Activated naive CD4-positive, alpha-beta T cell treated with anti-CD3 and anti-CD28 coated beads, Interleukin-2, amount 10 ng/mL, durations not matched to agents 7 days and 5 days (primary cell): ENCODE measurements at regions of chr1 and their contacts with region 1.

Region 1: GRCh38 chr1:45569962-45570581 is 13.8 kb upstream of the NASP start:
- DNase-seq: peak; percentile 80
- H3K4me3 Mint-ChIP-seq: no peak overlapping the region
- H3K27ac Mint-ChIP-seq: no peak overlapping the region
- H3K4me1 Mint-ChIP-seq: no peaks in the 10 kb centered on the region
- H3K27me3 Mint-ChIP-seq: no peaks in the 10 kb centered on the region

Region 2: DNA sequence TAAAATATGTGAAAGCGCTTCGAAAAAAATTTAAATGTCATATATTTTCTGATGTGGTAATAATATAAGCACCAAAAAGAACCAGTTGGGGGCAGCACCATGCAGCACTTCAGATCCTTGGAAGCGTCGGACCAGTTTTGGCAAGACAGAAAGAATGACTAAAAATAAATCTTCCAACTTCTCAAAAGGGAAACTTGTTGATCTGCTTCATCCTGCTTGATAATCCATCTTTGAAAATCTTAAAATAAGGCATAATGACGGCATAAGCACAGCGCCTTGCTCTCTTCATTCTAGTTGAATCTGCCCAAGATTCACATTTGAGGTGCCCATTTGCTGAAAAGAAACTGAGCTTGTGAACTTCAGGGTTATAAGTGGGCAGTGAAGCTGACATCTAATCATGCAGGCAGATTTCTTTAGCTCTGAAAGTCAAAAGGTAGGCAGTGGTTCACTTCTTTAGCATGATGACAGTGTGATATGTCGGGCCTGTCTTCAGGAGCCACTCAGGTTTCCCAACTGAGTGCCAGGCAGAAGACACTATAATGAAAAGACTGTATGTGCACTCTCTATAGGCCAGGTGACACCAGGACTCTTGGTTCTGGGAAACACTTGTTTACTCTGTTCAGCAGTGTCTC is 210.1 kb before region 1 on chr1:
- CTCF ChIA-PET with region 1: interaction called, 40 read pairs
- DNase-seq: peak; percentile 65
- H3K4me3 Mint-ChIP-seq: no peak overlapping the region
- H3K27ac Mint-ChIP-seq: no peak overlapping the region
- H3K4me1 Mint-ChIP-seq: peaks cover 5% of the 10 kb centered on the region
- H3K27me3 Mint-ChIP-seq: no peaks in the 10 kb centered on the region

Region 3: DNA sequence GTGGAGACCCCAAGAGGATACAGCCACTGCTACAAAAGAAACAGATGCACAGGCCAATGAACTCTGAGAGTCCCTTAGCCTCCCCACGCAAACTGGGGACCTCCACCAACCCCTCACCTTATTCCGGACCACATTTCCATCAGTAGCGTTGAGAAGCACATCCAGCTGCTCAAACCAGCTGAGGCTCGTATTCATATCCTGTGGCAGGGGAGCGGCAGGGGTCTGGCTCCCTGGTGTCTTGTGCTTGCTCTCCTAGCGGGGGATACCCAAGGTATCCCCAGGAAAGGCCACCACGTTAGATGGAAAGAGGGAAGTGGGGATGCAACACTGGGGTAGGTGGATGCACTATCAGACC is 70.7 kb before region 1 on chr1:
- CTCF ChIA-PET with region 1: interaction called, 21 read pairs
- DNase-seq: peak; percentile 44
- H3K4me3 Mint-ChIP-seq: peak overlapping the region; percentile 93
- H3K27ac Mint-ChIP-seq: peak overlapping the region; percentile 89
- H3K4me1 Mint-ChIP-seq: peaks cover 32% of the 10 kb centered on the region
- H3K27me3 Mint-ChIP-seq: no peaks in the 10 kb centered on the region

Region 4: DNA sequence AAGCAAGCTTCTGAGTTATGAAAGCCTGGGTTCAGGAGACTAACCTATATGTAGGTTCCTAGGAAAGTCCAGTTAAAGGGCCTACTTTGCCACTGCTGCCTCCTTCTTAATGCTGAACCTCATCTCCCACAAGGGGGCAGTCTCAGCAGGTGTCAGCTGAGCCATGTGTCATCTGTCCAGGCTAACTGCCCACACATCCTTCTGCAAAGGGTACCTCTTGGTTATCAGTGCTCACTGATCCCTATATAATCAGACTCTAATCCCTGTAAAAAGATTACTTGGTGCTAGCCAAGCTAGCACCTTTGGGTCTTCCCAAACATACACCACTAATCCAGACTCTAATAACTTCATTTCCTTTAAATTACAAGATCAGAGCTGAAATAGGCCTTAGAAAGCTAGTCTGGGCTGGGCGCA is 57.4 kb before region 1 on chr1:
- CTCF ChIA-PET with region 1: interaction called, 176 read pairs
- DNase-seq: peak; percentile 76
- H3K4me3 Mint-ChIP-seq: no peak overlapping the region
- H3K27ac Mint-ChIP-seq: no peak overlapping the region
- H3K4me1 Mint-ChIP-seq: peaks cover 10% of the 10 kb centered on the region
- H3K27me3 Mint-ChIP-seq: no peaks in the 10 kb centered on the region

Region 5: DNA sequence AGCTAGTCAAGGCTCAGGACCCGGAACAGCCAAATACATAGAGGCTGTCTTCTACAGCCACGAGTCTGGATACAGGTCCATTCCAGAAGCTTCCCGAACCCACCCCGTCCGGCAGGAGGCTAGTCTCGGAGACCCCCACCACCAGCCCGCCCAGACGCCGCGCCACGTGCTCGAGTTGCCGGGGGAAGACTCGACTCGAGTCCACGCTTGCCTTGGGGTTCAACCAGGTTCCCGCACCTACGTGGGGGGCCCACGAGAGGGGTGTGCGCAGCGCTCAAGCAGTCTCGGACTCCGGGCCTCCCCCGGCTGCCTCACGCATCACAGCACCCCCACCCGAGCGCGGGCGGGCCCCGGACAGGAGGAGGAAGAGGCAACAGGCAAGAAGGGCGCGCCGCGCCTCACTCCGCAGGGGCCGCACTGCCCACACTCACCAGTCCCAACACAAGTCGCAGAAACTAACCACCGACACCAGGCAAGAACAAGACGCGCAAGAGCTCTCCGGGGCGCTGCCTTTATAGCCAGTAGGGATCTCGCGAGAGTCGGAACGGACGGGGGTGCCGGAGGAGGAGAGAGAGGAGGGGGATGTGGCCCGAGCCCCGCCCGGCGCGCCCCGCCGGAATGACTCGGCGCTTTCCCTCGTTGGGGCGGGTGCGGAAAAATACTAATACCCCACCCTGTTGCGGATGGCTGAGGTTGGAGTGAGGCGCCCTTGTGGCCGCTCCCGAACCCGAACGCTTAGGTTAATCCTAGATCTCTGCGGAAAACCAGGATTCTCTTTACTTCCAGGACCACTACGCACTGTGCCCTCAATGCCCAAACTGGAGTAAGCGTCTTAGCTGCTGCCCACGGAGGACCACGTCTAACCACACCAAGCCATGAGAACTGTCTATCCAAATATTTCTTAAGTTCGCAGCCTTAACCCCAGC is 48.4 kb before region 1 on chr1 and contains the start of gene PRDX1:
- CTCF ChIA-PET with region 1: interaction called, 60 read pairs
- DNase-seq: peak; percentile 97
- H3K4me3 Mint-ChIP-seq: peak within 1 kb of the TSS; percentile 96
- H3K27ac Mint-ChIP-seq: peak within 1 kb of the TSS; percentile 83
- H3K4me1 Mint-ChIP-seq: peaks cover 54% of the 10 kb centered on the region
- H3K27me3 Mint-ChIP-seq: peaks cover 2% of the 10 kb centered on the region

Region 6: GRCh38 chr1:45554198-45554597 is 15.9 kb before region 1 on chr1:
- CTCF ChIA-PET with region 1: interaction called, 10 read pairs
- DNase-seq: no peak
- H3K4me3 Mint-ChIP-seq: no peak overlapping the region
- H3K27ac Mint-ChIP-seq: no peak overlapping the region
- H3K4me1 Mint-ChIP-seq: peaks cover 35% of the 10 kb centered on the region
- H3K27me3 Mint-ChIP-seq: peaks cover 3% of the 10 kb centered on the region

Region 7: GRCh38 chr1:45843474-45843905 is 273.4 kb after region 1 on chr1:
- CTCF ChIA-PET with region 1: no interaction called
- DNase-seq: no peak
- H3K4me3 Mint-ChIP-seq: no peak overlapping the region
- H3K27ac Mint-ChIP-seq: peak overlapping the region; percentile 38
- H3K4me1 Mint-ChIP-seq: peaks cover 15% of the 10 kb centered on the region
- H3K27me3 Mint-ChIP-seq: no peaks in the 10 kb centered on the region